GM12878 (cell line): ENCODE measurements at regions of chr14 and their contacts with region 1.

Region 1: GRCh38 chr14:103418481-103418818 is 33.2 kb downstream of the MARK3 start:
- DNase-seq: no peak
- ATAC-seq: peak; percentile 62
- H3K4me3 ChIP-seq: peak overlapping the region; percentile 46
- H3K27ac ChIP-seq: peak overlapping the region; percentile 22; the same call in 1 of the 2 replicates
- H3K4me1 ChIP-seq: peaks cover 16% of the 10 kb centered on the region; the same call in 1 of the 2 replicates
- H3K27me3 ChIP-seq: no peaks in the 10 kb centered on the region
- CTCF ChIP-seq: no peak
- EP300 ChIP-seq: no peak
- POLR2A ChIP-seq: no peak
- RAD21 ChIP-seq: no peak

Region 2: GRCh38 chr14:103401223-103402214 is 16.9 kb before region 1 on chr14:
- CTCF ChIA-PET with region 1: interaction called, 13 read pairs
- POLR2A ChIA-PET with region 1: interaction called, 6 read pairs
- RAD21 ChIA-PET with region 1: interaction called, 3 read pairs
- SMC1A ChIA-PET with region 1: interaction called, 8 read pairs
- in situ Hi-C with region 1: no loop called
- intact Hi-C with region 1: no loop called
- DNase-seq: no peak
- ATAC-seq: peak; percentile 79
- H3K4me3 ChIP-seq: peak overlapping the region; percentile 48; the same call in 1 of the 2 replicates
- H3K27ac ChIP-seq: peak overlapping the region; percentile 12
- H3K4me1 ChIP-seq: peaks cover 26% of the 10 kb centered on the region
- H3K27me3 ChIP-seq: no peaks in the 10 kb centered on the region
- CTCF ChIP-seq: no peak
- EP300 ChIP-seq: no peak
- POLR2A ChIP-seq: no peak
- RAD21 ChIP-seq: no peak